ENCODE measurements at regions of chr5 and their contacts with region 1.

Region 1: DNA sequence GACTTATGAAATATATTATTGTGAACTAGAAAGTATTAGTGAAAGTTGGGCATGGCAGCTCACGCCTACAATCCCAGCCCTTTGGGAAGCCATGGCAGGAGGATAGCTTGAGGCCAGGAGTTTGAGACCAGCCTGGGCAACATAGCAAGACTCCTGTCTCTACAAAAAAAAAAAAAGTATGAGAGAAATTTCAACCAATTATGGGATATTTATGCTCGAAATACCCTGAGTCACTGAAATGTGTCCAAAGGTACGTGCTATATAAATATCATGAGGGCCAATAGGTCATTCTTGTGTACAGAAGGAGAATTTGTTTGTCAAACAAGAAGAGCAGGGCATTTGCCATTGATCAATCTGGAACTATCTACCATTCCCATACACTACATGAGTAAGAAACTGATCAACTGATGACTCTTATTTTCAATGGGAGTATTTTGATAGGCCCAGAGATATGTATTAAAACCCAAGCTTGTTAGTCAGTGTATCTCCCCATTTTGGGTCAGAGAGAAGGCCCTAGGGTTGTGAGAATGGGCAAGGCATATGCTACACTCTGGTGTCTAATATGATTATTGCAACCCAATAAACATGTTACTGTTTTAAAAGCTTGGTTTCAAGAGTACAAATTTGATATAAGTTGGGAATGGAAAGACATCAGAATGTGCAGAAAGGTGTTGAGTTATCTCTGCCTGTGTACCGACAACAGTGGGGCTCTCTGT is 21.7 kb upstream of the HOMER1 start:
- DNase-seq: no peak
- H3K4me3 ChIP-seq: no peak overlapping the region
- H3K27ac ChIP-seq: no peak overlapping the region
- H3K4me1 ChIP-seq: no peaks in the 10 kb centered on the region
- H3K27me3 ChIP-seq: no peaks in the 10 kb centered on the region
- CTCF ChIP-seq: peak in 1 of 3 donors; percentile 19
- POLR2A ChIP-seq: no peak

Region 2: GRCh38 chr5:79762929-79763328 is 227.3 kb after region 1 on chr5:
- intact Hi-C with region 1: loop called (anchors 5 kb)
- DNase-seq: no peak
- H3K4me3 ChIP-seq: no peak overlapping the region
- H3K27ac ChIP-seq: no peak overlapping the region
- H3K4me1 ChIP-seq: no peaks in the 10 kb centered on the region
- H3K27me3 ChIP-seq: no peaks in the 10 kb centered on the region
- CTCF ChIP-seq: no peak
- POLR2A ChIP-seq: no peak

Measured in breast epithelium (tissue), 4 donors.